ENCODE measurements at regions of chr2 and their contacts with region 1.

Region 1: DNA sequence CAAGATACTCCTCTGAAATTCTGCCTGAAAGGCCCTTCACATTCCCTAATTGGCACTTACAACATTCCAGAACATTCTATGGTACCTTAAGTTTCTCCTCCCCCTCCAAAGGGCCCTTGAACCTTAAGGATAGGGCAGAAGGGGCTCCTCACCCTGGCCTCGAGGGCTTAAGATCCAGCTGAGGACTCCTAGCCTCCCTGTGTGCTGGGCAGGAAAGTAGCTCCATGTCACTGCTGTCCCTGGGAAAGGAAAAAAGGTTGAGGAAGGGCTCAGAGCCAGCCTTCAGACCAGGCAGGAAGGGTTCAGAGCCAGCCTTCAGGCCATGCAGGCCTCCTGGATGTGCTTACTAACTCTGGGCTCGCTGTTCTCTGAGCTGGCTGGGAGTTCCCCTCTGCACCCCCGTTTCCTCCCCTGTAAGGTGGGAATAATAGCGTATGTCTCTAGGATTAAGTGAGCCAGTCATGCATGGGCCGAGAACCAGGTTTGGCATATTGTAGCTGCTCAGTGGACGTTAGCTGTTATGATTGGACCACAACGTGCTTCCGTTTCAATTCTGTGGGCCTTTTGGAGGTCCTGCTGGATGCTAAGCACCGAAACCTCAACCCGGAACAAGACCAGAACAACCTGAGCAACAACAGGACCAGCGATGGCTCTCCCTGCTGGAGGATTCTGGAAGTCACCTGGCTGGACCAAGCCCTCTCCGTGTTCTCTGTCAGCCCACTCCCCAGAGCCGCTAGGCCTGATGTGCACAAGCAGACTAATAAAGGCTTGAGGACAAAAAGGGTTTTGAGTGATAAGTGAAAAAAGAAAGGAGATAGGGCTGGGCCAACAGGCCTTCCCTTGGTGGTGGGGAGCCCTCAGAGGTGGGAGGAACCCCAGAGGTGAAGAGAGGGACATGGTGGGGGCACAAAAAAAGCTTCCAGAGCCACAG is 1.0 kb upstream of the B3GNT7 start:
- DNase-seq: peak in 1 of 4 donors; percentile 35
- ATAC-seq: peak; percentile 68
- H3K4me3 ChIP-seq: peak overlapping the region in 1 of 2 donors; percentile 56
- H3K27ac ChIP-seq: peak overlapping the region; percentile 60 to 80
- H3K4me1 ChIP-seq: peaks cover 6 to 45% of the 10 kb centered on the region in 2 donors
- H3K27me3 ChIP-seq: peaks cover 4 to 33% of the 10 kb centered on the region in 2 donors
- CTCF ChIP-seq: no peak

Region 2: GRCh38 chr2:231161877-231162329 is 232.6 kb before region 1 on chr2:
- intact Hi-C with region 1: no loop called
- DNase-seq: no peak
- ATAC-seq: peak; percentile 83
- H3K4me3 ChIP-seq: no peak overlapping the region
- H3K27ac ChIP-seq: peak overlapping the region; percentile 55 to 74
- H3K4me1 ChIP-seq: peaks cover 10 to 11% of the 10 kb centered on the region in 2 donors
- H3K27me3 ChIP-seq: no peaks in the 10 kb centered on the region
- CTCF ChIP-seq: no peak

Region 3: DNA sequence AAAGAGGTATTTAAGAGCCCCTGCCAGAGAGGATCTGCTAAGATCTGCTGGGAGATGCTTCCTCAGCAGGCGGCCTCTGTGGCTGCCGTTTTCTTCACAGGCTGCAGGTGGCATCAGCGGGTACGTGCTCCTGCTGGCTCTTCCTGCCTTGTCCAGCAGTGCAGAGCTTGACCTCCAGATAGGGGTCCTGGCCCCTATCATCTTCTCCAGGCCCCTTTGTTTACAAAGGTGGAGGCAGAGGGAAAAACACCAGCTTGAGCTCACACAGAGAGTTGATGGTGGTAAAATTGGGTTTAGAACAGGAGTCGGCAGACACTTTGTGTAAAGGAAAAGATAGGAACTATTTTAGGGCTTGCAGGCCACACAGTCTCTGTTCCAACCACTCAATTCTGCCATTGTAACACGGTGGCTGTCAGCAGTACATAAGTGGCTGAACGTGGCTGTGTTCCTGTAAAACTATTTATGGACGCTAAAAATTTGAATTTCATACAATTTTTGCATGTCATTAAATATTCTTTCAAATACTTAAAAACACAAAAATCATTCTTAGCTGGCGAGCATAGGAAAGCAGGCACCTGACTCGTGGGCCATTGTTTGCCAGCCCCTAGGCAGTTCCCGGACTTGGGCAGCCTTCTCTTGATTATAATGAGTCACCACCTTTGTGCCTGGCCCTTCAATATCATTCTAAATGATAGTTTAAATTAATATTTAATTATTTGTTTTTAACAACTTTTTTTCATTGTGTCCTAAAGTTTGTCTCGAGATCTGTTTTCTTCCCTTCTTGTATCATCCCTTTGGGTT is 97.2 kb before region 1 on chr2:
- intact Hi-C with region 1: loop called in 1 of 2 experiments (anchors 10 kb)
- DNase-seq: peak in 3 of 4 donors; percentile 42 to 83 (median 71)
- ATAC-seq: peak; percentile 64
- H3K4me3 ChIP-seq: no peak overlapping the region
- H3K27ac ChIP-seq: no peak overlapping the region
- H3K4me1 ChIP-seq: peaks cover 3 to 53% of the 10 kb centered on the region in 2 donors
- H3K27me3 ChIP-seq: no peaks in the 10 kb centered on the region
- CTCF ChIP-seq: peak; percentile 47 to 72